A673 (cell line): ENCODE measurements at regions of chr9 and their contacts with region 1.

Region 1: DNA sequence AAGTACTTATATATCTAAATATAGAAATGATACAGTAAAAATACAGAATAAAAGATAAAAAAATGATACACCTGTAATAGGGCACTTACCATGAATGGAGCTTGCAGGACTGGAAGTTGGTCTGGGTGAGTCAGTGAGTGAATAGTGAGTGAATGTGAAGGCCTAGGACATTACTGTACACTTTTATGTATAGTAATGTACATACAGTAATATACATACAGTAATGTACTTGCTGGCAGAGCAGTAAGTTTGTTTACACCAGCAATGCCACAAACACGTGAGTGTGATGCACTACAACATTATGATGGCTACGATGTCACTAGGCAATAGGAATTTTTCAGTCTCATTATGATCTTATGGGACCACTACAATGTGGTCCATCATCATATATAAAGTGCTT is 34.2 kb downstream of the SUSD1 start:
- DNase-seq: no peak
- H3K4me3 ChIP-seq: no peak overlapping the region
- H3K27ac ChIP-seq: no peak overlapping the region
- H3K4me1 ChIP-seq: no peaks in the 10 kb centered on the region
- H3K27me3 ChIP-seq: no peaks in the 10 kb centered on the region
- CTCF ChIP-seq: no peak

Region 2: GRCh38 chr9:112401175-112401815 is 260.4 kb after region 1 on chr9:
- CTCF ChIA-PET with region 1: no interaction called
- POLR2A ChIA-PET with region 1: no interaction called
- intact Hi-C with region 1: no loop called
- DNase-seq: no peak
- H3K4me3 ChIP-seq: no peak overlapping the region
- H3K27ac ChIP-seq: no peak overlapping the region
- H3K4me1 ChIP-seq: peaks cover 14% of the 10 kb centered on the region
- H3K27me3 ChIP-seq: no peaks in the 10 kb centered on the region
- CTCF ChIP-seq: no peak

Region 3: DNA sequence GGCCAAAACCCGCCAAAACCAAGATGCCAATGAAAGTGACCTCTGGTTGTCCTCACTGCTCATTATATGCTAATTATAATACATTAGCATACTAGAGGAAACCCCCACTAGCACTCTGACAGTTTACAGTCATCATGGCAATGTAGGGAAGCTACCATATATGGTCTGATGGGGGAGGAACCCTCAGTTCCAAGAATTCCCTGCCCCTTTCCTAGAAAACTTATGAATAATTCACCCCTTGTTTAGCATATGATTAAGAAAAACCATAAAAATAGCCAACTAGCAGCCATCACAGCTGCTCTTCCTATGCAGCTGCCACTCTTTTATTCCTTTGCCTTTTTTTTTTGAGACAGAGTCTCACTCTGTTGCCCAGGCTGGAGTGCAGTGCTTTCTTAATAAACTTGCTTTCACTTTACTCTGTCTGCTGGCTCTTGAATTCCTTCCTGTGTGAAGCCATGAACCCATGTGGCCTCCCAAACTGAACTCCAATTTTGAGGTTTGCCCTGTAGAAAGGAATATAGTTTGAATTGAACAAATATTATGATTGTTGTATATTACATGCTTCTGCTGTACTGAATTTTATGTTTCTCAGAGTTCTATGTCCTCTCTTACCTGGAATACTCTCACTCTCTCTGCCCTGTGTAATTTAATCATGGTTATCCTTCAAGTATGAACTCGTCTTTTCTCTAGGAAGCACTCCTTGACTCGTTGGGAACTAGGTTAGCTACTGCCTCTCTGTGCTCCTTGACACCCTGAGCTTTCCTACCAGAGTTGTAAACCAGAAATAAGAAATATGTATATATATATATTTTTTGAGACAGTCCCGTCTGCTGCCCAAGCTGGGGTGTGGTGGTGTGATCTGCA is 405.4 kb after region 1 on chr9:
- CTCF ChIA-PET with region 1: interaction called, 10 read pairs
- POLR2A ChIA-PET with region 1: no interaction called
- intact Hi-C with region 1: no loop called
- DNase-seq: peak; percentile 73
- H3K4me3 ChIP-seq: no peak overlapping the region
- H3K27ac ChIP-seq: peak overlapping the region; percentile 75
- H3K4me1 ChIP-seq: peaks cover 42% of the 10 kb centered on the region
- H3K27me3 ChIP-seq: no peaks in the 10 kb centered on the region
- CTCF ChIP-seq: no peak